Head of caudate nucleus (tissue), 42 donors: ENCODE measurements at regions of chr18 and their contacts with region 1.

Region 1: GRCh38 chr18:55234366-55235093 is 275.3 kb upstream of the CCDC68 start:
- DNase-seq: peak; percentile 61 to 96 (median 86)

Region 2: DNA sequence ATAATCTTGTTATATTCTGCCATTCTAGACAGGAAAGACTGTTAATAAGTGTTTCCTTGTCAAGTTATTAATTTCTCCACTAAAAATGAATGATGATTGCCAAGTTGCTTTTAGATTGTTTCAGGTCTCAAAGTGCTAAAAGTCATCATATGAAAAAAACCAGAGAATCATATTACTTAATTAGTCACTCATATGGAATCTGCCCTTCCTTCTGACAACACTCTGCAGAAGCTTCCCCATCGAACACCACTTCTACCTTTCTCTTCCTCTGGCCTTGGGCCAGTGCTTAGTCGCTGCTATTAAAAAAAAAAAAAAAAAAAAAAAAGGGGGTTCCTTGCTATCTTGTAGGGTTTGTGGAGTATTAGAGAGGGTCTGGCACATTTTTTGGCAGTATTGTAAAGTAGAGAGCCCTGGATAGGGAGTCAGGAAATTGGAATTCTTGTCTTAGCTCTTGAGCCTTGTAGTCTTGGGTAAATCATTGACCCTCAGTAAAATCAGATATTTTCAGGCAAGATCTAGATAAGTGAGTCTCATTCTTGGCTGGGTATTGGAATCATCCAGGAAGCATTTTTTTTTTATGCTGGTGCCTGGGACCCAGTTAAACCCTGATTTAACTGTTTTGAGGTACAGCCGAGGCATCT is 133.6 kb before region 1 on chr18:
- intact Hi-C with region 1: no loop called
- DNase-seq: no peak

Region 3: DNA sequence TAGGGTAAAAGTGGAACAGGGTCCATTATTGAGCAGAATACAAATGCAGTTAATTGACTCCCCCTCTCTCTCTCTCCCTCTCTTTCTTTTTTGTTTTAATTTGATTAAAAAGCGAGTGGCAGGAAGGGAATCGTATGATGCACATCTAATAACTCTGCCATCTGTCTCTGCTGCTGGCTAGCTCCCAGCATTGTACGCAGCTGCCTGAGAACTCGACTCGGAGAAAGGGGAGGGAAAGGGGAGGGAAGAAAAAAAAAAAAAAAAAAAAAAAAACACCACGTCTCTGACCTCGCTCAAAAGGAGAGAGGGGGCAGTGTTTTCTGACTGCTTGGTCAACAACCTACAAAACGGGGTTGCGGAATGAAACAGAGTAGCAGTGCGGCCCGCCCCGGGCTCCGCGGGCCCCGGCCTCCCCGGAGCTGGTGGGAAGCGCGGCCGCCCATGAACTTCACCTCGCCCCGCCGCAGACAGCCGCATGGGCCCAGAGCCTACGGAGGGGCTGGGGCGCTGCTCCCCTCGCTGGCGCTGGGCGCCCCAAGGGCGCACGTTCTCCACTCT is 87.7 kb after region 1 on chr18:
- intact Hi-C with region 1: loop called (anchors 5 kb)
- DNase-seq: peak; percentile 65 to 93 (median 84)

Region 4: GRCh38 chr18:56575819-56576663 is 1341.5 kb after region 1 on chr18:
- intact Hi-C with region 1: loop called (anchors 10 kb)
- DNase-seq: peak in 10 of 42 donors; percentile 13 to 75 (median 40)